ENCODE measurements at regions of chr2 and their contacts with region 1.

Region 1: GRCh38 chr2:42191285-42192009 is 22.3 kb downstream of the EML4 start:
- DNase-seq: no peak
- ATAC-seq: no peak
- H3K4me3 ChIP-seq: no peak overlapping the region
- H3K27ac ChIP-seq: no peak overlapping the region
- H3K4me1 ChIP-seq: peaks cover 0 to 9% of the 10 kb centered on the region in 2 experiments; a peak in 2 of 5 replicates
- H3K27me3 ChIP-seq: no peaks in the 10 kb centered on the region
- CTCF ChIP-seq: no peak
- EP300 ChIP-seq: no peak
- POLR2A ChIP-seq: no peak
- RAD21 ChIP-seq: no peak

Region 2: DNA sequence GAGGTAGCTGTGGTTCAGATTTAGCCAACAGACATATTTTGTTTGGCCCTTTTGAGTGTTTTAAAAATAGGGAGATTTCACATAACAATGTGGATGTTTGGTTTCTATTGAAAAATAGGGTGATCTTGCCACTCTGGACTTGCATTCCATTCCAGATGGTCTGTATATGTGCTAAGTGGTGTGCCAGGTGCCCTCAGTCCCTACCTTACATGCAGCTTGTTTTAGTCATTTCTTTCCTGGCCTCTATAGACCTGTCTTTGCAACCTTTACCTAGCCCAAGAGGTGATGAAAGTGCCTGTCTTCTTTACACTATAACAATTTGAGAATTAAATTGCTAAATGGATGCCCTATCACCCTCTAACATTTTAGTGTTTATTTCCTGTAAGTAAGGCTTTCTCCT is 11.1 kb before region 1 on chr2:
- CTCF ChIA-PET with region 1: no interaction called
- POLR2A ChIA-PET with region 1: interaction called, 10 read pairs
- in situ Hi-C with region 1: no loop called
- intact Hi-C with region 1: no loop called
- DNase-seq: no peak
- ATAC-seq: no peak
- H3K4me3 ChIP-seq: no peak overlapping the region
- H3K27ac ChIP-seq: no peak overlapping the region
- H3K4me1 ChIP-seq: 0 out of 5 replicates have a peak, but pooled peaks cover 0 to 2% of the 10 kb centered on the region in 2 experiments
- H3K27me3 ChIP-seq: no peaks in the 10 kb centered on the region
- CTCF ChIP-seq: no peak
- EP300 ChIP-seq: no peak
- POLR2A ChIP-seq: no peak
- RAD21 ChIP-seq: no peak

Region 3: DNA sequence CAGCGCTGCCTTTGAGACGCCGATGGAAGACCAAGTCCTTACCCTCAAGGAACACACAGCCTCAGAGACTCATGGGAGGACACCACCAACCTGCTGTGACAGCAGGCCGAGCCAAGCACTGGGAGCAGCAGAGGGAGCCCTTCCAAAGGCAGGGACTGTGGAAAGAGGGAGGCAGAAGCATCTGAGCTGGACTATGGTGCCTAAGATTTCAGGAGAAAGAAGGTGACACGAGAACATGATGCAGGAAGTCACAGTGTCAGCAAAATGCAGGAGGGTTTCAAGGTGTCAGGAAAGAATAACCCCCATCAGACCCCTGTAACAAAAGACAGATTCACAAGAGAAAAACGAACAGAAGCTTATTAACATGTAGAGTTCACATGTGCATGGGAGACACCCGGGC is 193.8 kb after region 1 on chr2:
- CTCF ChIA-PET with region 1: no interaction called
- POLR2A ChIA-PET with region 1: no interaction called
- in situ Hi-C with region 1: no loop called
- intact Hi-C with region 1: no loop called
- DNase-seq: peak in 2 of 4 experiments; percentile 19 to 47
- ATAC-seq: peak; percentile 87
- H3K4me3 ChIP-seq: no peak overlapping the region
- H3K27ac ChIP-seq: no peak overlapping the region
- H3K4me1 ChIP-seq: no peaks in the 10 kb centered on the region
- H3K27me3 ChIP-seq: peaks cover 10 to 53% of the 10 kb centered on the region in 2 experiments; a peak in 3 of 5 replicates
- CTCF ChIP-seq: peak; percentile 39 to 55 (median 47)
- EP300 ChIP-seq: no peak
- POLR2A ChIP-seq: no peak
- RAD21 ChIP-seq: peak; percentile 16 to 49; a peak in 2 of 4 replicates

Measured in K562 (cell line).